Right ventricle myocardium inferior (tissue), 1 donor: ENCODE measurements at regions of chr9 and their contacts with region 1.

Region 1: GRCh38 chr9:38651400-38652042 is 31.1 kb upstream of the ANKRD18A start:
- DNase-seq: no peak
- ATAC-seq: peak; percentile 76

Region 2: GRCh38 chr9:38677660-38678303 is 26.3 kb after region 1 on chr9:
- intact Hi-C with region 1: loop called (anchors 1 kb)
- DNase-seq: peak; percentile 64
- ATAC-seq: peak; percentile 91